Common myeloid progenitor, CD34-positive (primary cell): ENCODE measurements at regions of chr1 and their contacts with region 1.

Region 1: GRCh38 chr1:89605692-89606091 is 27.2 kb upstream of the LRRC8C start:
- DNase-seq: no peak
- H3K4me3 ChIP-seq: no peak overlapping the region
- H3K27ac ChIP-seq: no peak overlapping the region
- H3K4me1 ChIP-seq: no peaks in the 10 kb centered on the region
- H3K27me3 ChIP-seq: no peaks in the 10 kb centered on the region

Region 2: DNA sequence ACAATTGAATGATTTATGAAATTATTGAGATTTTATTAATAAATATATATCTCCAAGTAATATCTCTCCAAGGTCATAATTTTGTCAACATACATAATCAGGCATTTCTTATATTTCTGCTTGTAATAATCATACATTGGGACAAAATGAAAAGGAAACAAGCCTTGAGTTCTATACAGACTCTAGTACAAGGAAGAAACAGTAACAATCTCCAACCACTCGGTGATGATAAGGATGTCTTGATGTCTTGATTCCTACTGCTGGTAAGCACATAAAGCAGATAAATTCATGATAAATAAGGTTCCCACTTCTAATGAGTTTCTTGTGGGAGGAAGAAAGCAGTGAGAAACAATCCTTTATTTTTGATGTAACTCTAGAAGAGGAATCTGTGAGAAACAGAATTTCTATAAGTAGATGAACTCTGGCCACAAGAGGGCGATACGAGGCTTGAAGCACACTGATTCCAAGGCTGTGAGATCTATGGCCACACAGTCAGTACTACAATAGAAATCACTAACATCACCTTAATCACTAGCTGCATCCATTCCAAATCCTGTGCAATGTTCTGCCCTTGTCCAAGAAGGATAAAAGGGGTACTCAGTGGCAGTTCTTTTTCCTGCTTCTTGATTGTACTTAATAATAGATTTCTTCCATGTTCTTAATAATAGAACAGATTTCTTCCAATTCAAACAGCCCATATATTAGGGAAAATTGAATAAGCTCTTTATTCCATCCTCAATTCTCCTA is 122.5 kb before region 1 on chr1:
- CTCF ChIA-PET with region 1: interaction called, 11 read pairs
- POLR2A ChIA-PET with region 1: no interaction called
- DNase-seq: peak; percentile 78 to 91 (median 88)
- H3K4me3 ChIP-seq: no peak overlapping the region
- H3K27ac ChIP-seq: no peak overlapping the region
- H3K4me1 ChIP-seq: peaks cover 0 to 17% (median 7%) of the 10 kb centered on the region in 4 experiments
- H3K27me3 ChIP-seq: peaks cover 0 to 1% (median 0%) of the 10 kb centered on the region in 5 experiments

Region 3: DNA sequence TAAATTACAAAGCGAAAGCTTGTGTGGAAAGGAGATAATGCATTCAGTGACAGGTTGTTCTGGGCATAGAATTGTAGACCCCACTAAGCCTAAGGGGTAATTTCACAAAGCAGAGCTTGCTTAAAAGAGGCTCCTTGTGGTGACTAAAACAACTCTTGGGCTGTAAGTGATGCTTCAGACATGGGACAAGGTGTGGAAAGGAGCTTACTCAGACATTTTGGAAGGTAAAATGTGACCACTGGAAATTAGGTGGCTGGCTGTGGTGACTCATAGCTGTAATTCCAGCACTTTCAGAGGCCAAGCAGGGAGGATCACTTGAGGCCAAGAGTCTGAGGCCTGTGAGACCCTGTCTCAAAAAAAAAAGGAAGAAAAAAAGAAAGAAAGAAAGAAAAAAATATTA is 23.8 kb before region 1 on chr1:
- CTCF ChIA-PET with region 1: interaction called, 10 read pairs
- POLR2A ChIA-PET with region 1: interaction called, 3 read pairs
- DNase-seq: no peak
- H3K4me3 ChIP-seq: no peak overlapping the region
- H3K27ac ChIP-seq: no peak overlapping the region
- H3K4me1 ChIP-seq: no peaks in the 10 kb centered on the region
- H3K27me3 ChIP-seq: no peaks in the 10 kb centered on the region

Region 4: DNA sequence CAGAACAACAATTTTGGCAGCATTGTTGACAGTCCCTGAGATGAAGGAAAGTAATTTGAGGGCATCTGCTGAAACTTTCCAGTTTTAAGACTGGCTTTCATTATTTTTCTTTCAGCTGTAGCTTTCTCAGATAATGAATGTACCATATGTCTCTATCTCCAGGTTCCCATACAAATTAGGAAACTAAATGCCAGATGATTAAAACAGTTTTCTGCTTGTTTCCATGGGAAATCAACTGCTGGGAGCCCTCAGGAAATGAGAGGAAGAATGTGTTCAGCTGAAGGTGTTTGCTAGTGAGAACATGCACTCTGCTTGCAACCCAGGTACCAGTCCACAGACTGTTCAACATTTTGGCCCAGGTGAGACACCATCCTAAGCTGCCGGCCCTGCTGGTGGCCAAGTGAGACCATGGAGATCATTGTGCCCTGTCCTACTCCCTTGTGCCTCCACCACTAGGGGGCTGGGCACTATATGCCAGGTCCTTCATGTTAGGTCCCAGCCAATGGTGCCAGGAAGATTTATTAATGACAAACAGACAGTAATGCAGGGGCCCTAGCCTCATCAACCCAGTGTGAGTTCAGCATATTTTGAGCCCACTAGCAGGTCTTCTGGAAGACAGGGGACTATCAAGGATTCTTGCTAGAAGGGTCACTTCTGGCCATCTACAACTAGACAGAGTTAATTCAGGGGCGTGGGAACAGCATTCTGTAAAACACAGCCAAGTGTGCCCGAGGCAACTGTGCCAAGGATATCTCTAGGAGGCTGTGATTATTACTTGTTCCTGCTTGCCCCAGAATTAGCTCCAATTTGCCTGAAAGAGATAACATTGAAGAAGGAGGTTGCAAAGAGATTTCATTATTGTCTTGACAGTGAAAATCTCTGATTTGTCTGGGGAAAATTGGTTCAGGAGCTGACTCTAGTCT is 10.2 kb after region 1 on chr1:
- CTCF ChIA-PET with region 1: interaction called, 63 read pairs
- POLR2A ChIA-PET with region 1: no interaction called
- DNase-seq: peak; percentile 50 to 65 (median 61)
- H3K4me3 ChIP-seq: no peak overlapping the region
- H3K27ac ChIP-seq: no peak overlapping the region
- H3K4me1 ChIP-seq: no peaks in the 10 kb centered on the region
- H3K27me3 ChIP-seq: no peaks in the 10 kb centered on the region